ENCODE measurements at regions of chr19 and their contacts with region 1.

Region 1: GRCh38 chr19:17305517-17306284 is at the start of gene MRPL34:
- DNase-seq: peak; percentile 99
- ATAC-seq: peak; percentile 79
- H3K4me3 ChIP-seq: peak within 1 kb of the TSS; percentile 83
- H3K27ac ChIP-seq: peak within 1 kb of the TSS; percentile 84
- H3K4me1 ChIP-seq: peaks cover 22% of the 10 kb centered on the region
- H3K27me3 ChIP-seq: no peaks in the 10 kb centered on the region
- CTCF ChIP-seq: peak; percentile 78 to 91 (median 80); a peak in 5 of 6 replicates
- EP300 ChIP-seq: no peak; a peak in 1 of 4 replicates
- POLR2A ChIP-seq: peak; percentile 73
- RAD21 ChIP-seq: peak; percentile 36; the same call in 1 of the 2 replicates
- polyA plus RNA-seq, gene MRPL34: 8.6 to 25.2 TPM

Region 2: GRCh38 chr19:16897154-16897855 is 408.4 kb before region 1 on chr19:
- CTCF ChIA-PET with region 1: no interaction called
- POLR2A ChIA-PET with region 1: no interaction called
- RAD21 ChIA-PET with region 1: no interaction called
- SMC1A ChIA-PET with region 1: no interaction called
- in situ Hi-C with region 1: no loop called
- intact Hi-C with region 1: loop called (anchors 10 kb)
- DNase-seq: peak; percentile 60
- ATAC-seq: peak; percentile 85
- H3K4me3 ChIP-seq: peak overlapping the region; percentile 90
- H3K27ac ChIP-seq: peak overlapping the region; percentile 7; the same call in 1 of the 2 replicates
- H3K4me1 ChIP-seq: peaks cover 44% of the 10 kb centered on the region
- H3K27me3 ChIP-seq: no peaks in the 10 kb centered on the region
- CTCF ChIP-seq: no peak
- EP300 ChIP-seq: no peak
- POLR2A ChIP-seq: peak; percentile 28; the same call in 1 of the 2 replicates
- RAD21 ChIP-seq: no peak

Region 3: DNA sequence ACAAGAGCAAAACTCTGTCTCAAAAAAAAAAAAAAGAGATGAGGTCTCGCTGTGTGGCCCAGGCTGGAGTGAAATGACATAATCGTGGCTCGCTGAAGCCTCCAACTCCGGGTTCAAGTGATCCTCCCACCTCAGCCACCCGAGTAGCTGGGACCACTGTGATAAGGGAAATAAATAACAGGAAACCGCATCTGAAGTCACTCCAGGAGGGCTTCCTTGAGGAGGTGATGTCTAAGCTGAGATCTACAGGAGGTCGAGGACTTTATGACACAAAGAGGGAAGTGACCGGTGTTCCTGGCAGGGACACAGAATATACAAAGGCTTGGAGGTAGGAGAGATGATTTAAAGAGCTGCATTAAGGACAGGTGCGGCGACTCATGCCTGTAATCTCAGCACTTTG is 51.1 kb before region 1 on chr19:
- CTCF ChIA-PET with region 1: no interaction called
- POLR2A ChIA-PET with region 1: no interaction called
- RAD21 ChIA-PET with region 1: no interaction called
- SMC1A ChIA-PET with region 1: no interaction called
- in situ Hi-C with region 1: no loop called
- intact Hi-C with region 1: no loop called
- DNase-seq: no peak
- ATAC-seq: no peak
- H3K4me3 ChIP-seq: no peak overlapping the region
- H3K27ac ChIP-seq: no peak overlapping the region
- H3K4me1 ChIP-seq: no peaks in the 10 kb centered on the region
- H3K27me3 ChIP-seq: no peaks in the 10 kb centered on the region
- CTCF ChIP-seq: no peak
- EP300 ChIP-seq: no peak
- POLR2A ChIP-seq: no peak
- RAD21 ChIP-seq: no peak

Region 4: GRCh38 chr19:17292286-17293097 is 13.2 kb before region 1 on chr19:
- CTCF ChIA-PET with region 1: interaction called, 43 read pairs
- POLR2A ChIA-PET with region 1: interaction called, 12 read pairs
- RAD21 ChIA-PET with region 1: interaction called, 14 read pairs
- SMC1A ChIA-PET with region 1: interaction called, 7 read pairs
- in situ Hi-C with region 1: no loop called
- intact Hi-C with region 1: no loop called
- DNase-seq: peak; percentile 46
- ATAC-seq: peak; percentile 97
- H3K4me3 ChIP-seq: peak overlapping the region; percentile 86
- H3K27ac ChIP-seq: peak overlapping the region; percentile 35
- H3K4me1 ChIP-seq: peaks cover 4% of the 10 kb centered on the region; the same call in 1 of the 2 replicates
- H3K27me3 ChIP-seq: no peaks in the 10 kb centered on the region
- CTCF ChIP-seq: peak; percentile 84 to 95 (median 85)
- EP300 ChIP-seq: no peak
- POLR2A ChIP-seq: peak; percentile 82
- RAD21 ChIP-seq: peak; percentile 94

Region 5: DNA sequence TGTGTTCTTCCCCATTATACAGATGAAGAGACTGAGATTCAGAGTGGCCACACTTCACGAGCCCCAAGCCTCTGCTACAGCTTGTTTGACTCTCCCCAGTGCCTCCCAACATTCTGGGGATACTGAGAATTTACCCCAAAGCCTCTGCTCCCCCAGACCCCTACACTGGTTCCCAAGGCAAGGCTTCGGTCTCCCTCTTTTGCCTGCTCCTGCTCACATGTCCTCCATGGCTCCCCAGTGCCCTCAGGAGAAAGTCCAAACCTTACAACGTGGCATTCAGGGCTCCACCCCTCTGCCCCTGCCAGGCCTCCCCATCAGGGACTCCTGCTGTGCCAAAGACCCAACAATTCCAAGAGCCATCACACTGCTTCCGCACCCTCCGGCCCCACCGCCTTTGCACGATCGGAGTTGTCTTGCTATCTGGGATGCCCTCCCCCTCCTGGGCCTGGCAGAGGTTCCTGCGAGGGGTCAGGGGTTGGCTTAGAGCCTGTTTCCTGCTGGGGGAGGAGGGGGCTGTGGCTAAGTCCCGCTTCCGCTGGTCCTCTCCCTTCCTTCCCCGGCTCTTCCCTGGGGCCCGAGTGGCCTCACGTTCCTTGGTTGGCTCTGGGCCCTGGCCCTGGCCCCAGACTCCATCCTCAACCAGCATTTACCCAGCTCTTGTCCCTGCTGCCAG is 47.0 kb after region 1 on chr19:
- CTCF ChIA-PET with region 1: no interaction called
- POLR2A ChIA-PET with region 1: no interaction called
- RAD21 ChIA-PET with region 1: no interaction called
- SMC1A ChIA-PET with region 1: no interaction called
- in situ Hi-C with region 1: no loop called
- intact Hi-C with region 1: no loop called
- DNase-seq: no peak
- ATAC-seq: no peak
- H3K4me3 ChIP-seq: no peak overlapping the region
- H3K27ac ChIP-seq: no peak overlapping the region
- H3K4me1 ChIP-seq: peaks cover 4% of the 10 kb centered on the region
- H3K27me3 ChIP-seq: no peaks in the 10 kb centered on the region
- CTCF ChIP-seq: no peak
- EP300 ChIP-seq: no peak
- POLR2A ChIP-seq: no peak
- RAD21 ChIP-seq: no peak

Region 6: GRCh38 chr19:17390665-17391370 is 85.1 kb after region 1 on chr19:
- CTCF ChIA-PET with region 1: interaction called, 10 read pairs
- POLR2A ChIA-PET with region 1: interaction called, 4 read pairs
- RAD21 ChIA-PET with region 1: interaction called, 7 read pairs
- SMC1A ChIA-PET with region 1: no interaction called
- in situ Hi-C with region 1: no loop called
- intact Hi-C with region 1: no loop called
- DNase-seq: no peak
- ATAC-seq: peak; percentile 98
- H3K4me3 ChIP-seq: peak overlapping the region; percentile 72
- H3K27ac ChIP-seq: no peak overlapping the region
- H3K4me1 ChIP-seq: peaks cover 9% of the 10 kb centered on the region
- H3K27me3 ChIP-seq: peaks cover 2 to 3% of the 10 kb centered on the region in 2 experiments; a peak in 3 of 4 replicates
- CTCF ChIP-seq: peak; percentile 61 to 95 (median 65); a peak in 4 of 6 replicates
- EP300 ChIP-seq: no peak
- POLR2A ChIP-seq: peak; percentile 48
- RAD21 ChIP-seq: peak; percentile 56

Measured in GM12878 (cell line).